BJ (cell line): ENCODE measurements at regions of chr2 and their contacts with region 1.

Region 1: DNA sequence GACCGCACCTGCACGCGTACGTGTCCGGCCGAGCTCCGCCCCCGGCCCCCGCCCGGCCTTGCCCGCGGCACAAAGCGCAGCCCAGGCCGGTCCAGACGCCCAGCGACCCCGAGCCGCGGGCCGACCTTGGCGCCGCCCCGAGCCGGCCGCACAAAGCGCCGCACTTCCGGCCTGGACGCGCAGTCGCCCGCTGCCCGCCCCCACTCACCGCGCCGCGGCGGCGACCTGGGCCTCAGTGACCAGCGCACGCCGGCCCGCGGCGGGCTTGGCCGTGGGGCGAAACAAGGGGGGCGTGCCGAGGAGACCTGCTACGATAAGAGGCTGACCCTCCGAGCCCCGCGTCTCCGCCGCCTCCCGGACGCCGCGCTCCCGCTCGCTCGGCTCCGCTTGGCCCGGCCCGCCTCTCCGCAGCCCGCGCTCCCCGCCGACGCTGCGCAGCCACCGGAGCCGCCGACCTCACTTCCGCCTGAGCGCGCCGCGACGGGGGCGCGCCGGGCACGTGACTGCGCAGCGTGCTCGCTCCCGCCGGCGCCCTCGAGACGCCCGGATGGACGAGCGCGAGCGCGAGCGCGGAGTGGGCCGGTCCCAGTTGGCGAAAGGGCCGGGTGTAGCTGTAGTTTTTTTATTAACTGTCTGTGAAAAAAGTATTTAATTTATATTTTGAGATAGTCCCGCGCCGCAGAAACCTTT is at the start of gene FAM168B:
- DNase-seq: peak; percentile 42
- H3K4me3 ChIP-seq: peak within 1 kb of the TSS; percentile 63
- H3K27me3 ChIP-seq: no peaks in the 10 kb centered on the region
- CTCF ChIP-seq: no peak
- polyA plus RNA-seq, gene FAM168B: 62.9 and 85.6 TPM in 2 replicates

Region 2: DNA sequence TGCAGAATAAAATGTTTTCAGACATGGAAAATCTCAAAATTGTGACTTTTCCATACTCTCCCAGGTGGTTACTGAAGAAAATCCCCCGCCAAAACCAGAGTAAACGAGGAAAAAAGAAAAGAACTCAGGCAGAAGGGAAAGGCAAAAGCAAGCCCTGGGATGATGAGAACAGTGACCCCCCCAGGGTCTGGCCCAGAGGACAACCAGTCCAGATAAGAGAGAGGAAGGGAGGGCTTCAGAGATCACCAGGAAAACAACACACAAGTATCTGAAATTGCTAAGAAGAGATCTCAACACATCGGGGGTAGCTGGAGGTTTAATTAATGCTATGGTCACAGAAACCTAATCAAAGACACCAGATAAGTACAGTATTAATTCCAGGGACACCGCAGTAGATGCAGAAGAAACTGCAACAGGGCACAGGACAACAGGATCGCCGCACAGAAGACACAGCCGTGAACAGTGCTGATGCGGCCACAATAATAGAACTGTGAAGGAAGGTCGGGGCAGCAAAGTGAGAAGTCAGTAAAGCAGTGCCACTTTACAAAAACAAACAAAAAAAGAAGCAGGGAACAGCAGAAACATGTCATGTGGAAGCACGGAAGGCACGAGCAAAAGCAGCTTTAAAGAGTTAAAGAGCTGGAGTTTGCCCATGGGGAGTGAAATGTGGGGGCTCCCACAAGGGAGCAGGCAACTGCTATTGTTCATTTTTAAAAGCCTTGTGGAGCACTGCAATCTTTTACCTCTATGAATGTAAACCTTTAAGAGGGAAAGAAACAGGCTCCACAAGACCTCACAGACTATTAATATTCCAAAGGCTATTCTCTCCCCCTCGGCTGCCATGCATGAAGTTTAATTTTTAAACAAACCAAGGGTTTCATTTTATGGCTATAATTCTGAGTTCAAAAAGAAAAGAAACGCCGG is 28.3 kb before region 1 on chr2:
- CTCF ChIA-PET with region 1: no interaction called
- POLR2A ChIA-PET with region 1: interaction called, 13 read pairs
- DNase-seq: no peak
- H3K4me3 ChIP-seq: no peak overlapping the region
- H3K27me3 ChIP-seq: no peaks in the 10 kb centered on the region
- CTCF ChIP-seq: no peak